ENCODE measurements at regions of chr13 and their contacts with region 1.

Region 1: GRCh38 chr13:99356158-99357091 is 49.2 kb upstream of the GPR183 start:
- DNase-seq: peak; percentile 71
- ATAC-seq: peak; percentile 53
- H3K4me3 Mint-ChIP-seq: peak overlapping the region; percentile 56
- H3K27ac Mint-ChIP-seq: peak overlapping the region; percentile 93
- H3K4me1 Mint-ChIP-seq: peaks cover 97% of the 10 kb centered on the region
- H3K27me3 Mint-ChIP-seq: no peaks in the 10 kb centered on the region
- CTCF ChIP-seq: no peak

Region 2: DNA sequence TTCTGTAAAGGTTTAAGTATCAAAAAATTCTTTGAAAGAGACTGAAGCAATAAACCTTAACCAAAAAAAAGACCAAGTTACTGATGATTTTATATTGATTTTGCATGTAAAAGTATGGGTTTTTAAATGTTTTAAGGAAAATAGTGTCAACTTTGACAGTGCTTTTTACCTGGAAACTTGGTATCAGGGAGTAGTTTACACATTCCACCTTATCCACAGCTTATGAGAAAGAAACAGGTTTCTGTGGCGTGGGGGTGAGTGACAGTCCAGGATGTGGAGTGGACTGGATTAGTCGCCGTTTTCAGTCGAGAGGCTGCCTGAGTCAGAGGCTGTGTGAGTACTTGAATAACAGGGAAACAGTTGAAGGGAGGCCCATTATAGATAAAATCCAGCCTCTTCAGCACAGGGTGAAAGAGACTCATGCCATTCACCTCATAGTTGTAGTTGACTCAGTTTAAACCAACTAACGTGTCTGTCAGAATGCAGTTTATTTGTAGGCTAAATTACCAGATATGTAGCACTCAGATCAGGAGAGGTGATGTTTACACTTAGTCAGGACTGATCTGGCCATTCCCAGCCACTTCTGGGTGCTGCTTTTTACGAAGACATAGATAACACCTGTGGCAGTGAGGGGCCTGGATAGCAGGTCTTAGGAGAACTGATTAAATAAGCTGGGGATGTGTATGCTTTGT is 48.6 kb before region 1 on chr13:
- CTCF ChIA-PET with region 1: interaction called, 4 read pairs
- POLR2A ChIA-PET with region 1: interaction called, 5 read pairs
- intact Hi-C with region 1: loop called (anchors 5 kb)
- DNase-seq: peak; percentile 86
- ATAC-seq: peak; percentile 86
- H3K4me3 Mint-ChIP-seq: peak overlapping the region; percentile 76
- H3K27ac Mint-ChIP-seq: peak overlapping the region; percentile 93
- H3K4me1 Mint-ChIP-seq: peaks cover 85% of the 10 kb centered on the region
- H3K27me3 Mint-ChIP-seq: no peaks in the 10 kb centered on the region
- CTCF ChIP-seq: no peak

Region 3: DNA sequence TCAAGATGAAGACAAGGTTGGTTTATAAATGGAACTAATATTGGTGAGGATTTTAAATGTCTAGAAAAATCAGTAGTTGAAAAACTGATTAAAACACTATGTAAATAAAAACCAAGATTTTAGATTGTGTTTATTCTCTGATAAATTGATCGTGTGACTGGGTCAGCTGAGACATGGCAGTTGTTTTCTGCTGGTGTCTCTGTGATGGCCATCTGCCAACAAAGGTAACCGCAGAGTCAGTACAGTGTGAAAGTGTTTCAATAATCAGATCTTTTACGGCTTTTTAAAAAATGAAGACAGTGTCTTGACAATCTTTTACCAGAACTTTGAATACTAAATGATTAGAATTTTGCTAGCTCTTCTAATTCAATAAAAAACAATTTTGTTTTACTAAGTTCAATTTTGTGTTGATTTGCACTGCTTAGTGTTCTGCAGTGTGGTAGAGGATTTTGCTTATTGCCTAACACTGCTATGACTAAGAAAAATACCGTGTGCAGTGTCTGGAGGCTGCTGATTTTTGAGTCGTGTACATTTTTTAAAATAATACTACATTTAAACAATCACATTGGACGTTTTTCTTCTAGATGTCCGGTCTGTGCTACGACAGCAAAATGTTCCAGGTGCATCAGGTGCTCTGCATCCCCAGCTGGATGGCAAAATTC is 16.6 kb before region 1 on chr13:
- CTCF ChIA-PET with region 1: interaction called, 8 read pairs
- POLR2A ChIA-PET with region 1: interaction called, 15 read pairs
- intact Hi-C with region 1: no loop called
- DNase-seq: peak; percentile 61
- ATAC-seq: peak; percentile 57
- H3K4me3 Mint-ChIP-seq: no peak overlapping the region
- H3K27ac Mint-ChIP-seq: peak overlapping the region; percentile 17
- H3K4me1 Mint-ChIP-seq: peaks cover 63% of the 10 kb centered on the region
- H3K27me3 Mint-ChIP-seq: no peaks in the 10 kb centered on the region
- CTCF ChIP-seq: no peak

Region 4: DNA sequence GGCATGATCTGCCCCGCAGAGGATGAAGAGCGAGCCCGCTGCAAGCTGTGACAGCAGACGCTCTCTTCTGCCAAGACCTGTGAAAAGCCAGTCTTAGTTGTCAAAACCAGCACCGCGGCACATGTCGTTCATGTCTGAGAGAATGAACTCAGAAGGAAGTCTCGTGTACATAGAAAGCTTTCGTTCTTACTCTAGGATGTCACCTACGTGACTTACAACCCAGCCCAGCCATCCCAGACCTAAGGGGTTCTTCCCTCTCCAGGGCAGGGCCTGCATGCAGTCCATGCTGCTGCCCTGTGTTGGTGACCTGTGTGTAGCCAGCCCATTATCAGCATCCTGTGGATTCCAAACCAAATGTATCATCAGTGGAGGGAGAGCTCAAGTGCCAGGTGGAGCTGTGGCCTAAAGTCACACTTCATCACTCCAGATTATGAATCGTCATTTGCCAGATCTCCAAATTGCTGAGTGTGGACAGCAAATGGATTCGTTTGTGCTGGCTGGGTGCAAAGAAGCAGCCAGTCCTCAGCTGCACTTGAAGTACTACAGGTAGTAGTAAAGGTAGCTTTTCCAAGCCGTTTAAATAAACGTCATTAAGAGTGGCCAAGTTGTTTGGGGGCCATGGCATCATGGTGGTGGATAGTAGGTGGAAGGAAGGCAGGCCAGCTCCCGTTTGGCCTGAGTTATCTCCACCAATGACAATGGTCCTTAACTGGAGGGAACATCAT is 24.7 kb after region 1 on chr13:
- CTCF ChIA-PET with region 1: interaction called, 19 read pairs
- POLR2A ChIA-PET with region 1: interaction called, 26 read pairs
- intact Hi-C with region 1: loop called (anchors 2 kb)
- DNase-seq: peak; percentile 90
- ATAC-seq: peak; percentile 68
- H3K4me3 Mint-ChIP-seq: no peak overlapping the region
- H3K27ac Mint-ChIP-seq: peak overlapping the region; percentile 86
- H3K4me1 Mint-ChIP-seq: peaks cover 89% of the 10 kb centered on the region
- H3K27me3 Mint-ChIP-seq: no peaks in the 10 kb centered on the region
- CTCF ChIP-seq: no peak

Measured in activated CD8-positive, alpha-beta T cell treated with anti-CD3 and anti-CD28 coated beads for 36 hours (primary cell).